ENCODE measurements at regions of chr5 and their contacts with region 1.

Region 1: DNA sequence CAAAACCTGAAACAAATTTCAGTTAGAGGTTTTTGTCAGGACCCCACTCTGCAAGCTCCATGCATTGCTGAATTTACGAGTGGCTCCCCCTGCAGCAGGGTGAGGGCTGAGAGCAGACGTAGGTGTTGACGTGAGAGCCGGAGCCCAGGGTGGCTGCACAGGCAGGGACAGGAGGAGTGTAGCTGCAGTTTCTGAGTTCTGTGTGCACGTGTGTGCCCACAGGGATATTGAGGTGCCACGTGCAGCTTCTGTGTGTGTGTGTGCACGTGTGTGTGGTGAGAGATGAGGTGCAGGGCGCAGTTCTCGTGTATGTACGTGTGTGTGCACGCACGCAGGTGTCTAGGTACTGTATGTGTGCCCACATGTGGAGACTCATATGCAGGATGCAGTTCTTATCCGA is 14.6 kb downstream of the PLEKHG4B start:
- DNase-seq: no peak
- H3K4me3 ChIP-seq: no peak overlapping the region
- H3K27ac ChIP-seq: no peak overlapping the region
- H3K4me1 ChIP-seq: no peaks in the 10 kb centered on the region
- H3K27me3 ChIP-seq: peaks cover 72% of the 10 kb centered on the region
- CTCF ChIP-seq: no peak

Region 2: DNA sequence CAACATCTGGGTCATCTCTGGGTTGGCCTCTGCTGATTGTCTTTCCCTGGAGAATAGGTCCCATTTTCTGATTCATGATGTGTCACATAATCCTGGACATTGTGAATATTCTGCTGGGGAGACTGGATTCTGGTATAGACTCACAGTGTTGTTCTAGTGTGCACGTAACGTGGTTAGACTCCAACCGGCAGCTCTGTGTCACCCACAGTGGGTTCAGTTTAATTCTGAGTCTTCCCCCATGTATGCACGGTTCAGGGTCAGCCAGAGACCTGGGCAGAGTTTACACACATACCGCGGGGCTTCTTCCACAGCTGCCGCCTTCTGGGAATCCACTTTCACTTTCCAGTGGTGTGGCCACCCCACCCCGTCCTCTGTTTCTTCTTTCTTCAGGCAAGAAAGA is 46.7 kb after region 1 on chr5:
- CTCF ChIA-PET with region 1: no interaction called
- POLR2A ChIA-PET with region 1: interaction called, 12 read pairs
- intact Hi-C with region 1: no loop called
- DNase-seq: no peak
- H3K4me3 ChIP-seq: no peak overlapping the region
- H3K27ac ChIP-seq: no peak overlapping the region
- H3K4me1 ChIP-seq: no peaks in the 10 kb centered on the region
- H3K27me3 ChIP-seq: peaks cover 88% of the 10 kb centered on the region
- CTCF ChIP-seq: no peak

Region 3: DNA sequence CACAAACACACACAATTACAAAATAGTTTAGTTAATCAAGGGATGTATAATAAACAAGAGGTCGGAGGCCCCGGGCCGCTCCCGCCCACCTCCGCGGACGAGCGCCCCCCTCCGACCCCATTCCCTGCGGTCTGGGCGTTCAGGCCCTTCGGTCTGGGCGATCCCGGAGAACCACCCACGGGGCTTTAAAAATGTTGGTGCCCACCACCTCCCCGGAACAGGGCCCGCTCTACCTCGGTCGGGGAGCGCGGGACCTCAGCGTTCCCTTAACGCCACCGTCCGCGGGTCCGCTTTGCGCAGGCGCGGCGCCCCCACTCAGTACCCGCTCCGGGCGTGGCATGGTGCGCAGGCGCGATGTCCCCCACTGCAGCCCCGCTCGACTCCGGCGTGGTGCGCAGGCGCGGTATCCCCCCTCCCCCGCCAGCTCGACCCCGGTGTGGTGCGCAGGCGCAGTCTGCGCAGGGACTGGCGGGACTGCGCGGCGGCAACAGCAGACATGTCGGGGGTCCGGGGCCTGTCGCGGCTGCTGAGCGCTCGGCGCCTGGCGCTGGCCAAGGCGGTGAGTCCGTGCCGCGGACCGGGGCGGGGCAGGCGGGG is 111.4 kb after region 1 on chr5 and contains the starts of genes CCDC127 and SDHA:
- CTCF ChIA-PET with region 1: no interaction called
- POLR2A ChIA-PET with region 1: no interaction called
- intact Hi-C with region 1: no loop called
- DNase-seq: peak; percentile 86 to 100
- H3K4me3 ChIP-seq: peak within 1 kb of the TSS; percentile 79
- H3K27ac ChIP-seq: no peak within 1 kb of the TSS
- H3K4me1 ChIP-seq: peaks cover 21% of the 10 kb centered on the region
- H3K27me3 ChIP-seq: no peaks in the 10 kb centered on the region
- CTCF ChIP-seq: peak; percentile 67
- total RNA-seq, gene CCDC127: 24.1 and 31.1 TPM in 2 replicates
- total RNA-seq, gene SDHA: 347 and 443 TPM in 2 replicates

Region 4: GRCh38 chr5:285639-286557 is 179.3 kb after region 1 on chr5:
- CTCF ChIA-PET with region 1: no interaction called
- POLR2A ChIA-PET with region 1: no interaction called
- intact Hi-C with region 1: no loop called
- DNase-seq: no peak
- H3K4me3 ChIP-seq: no peak overlapping the region
- H3K27ac ChIP-seq: no peak overlapping the region
- H3K4me1 ChIP-seq: no peaks in the 10 kb centered on the region
- H3K27me3 ChIP-seq: no peaks in the 10 kb centered on the region
- CTCF ChIP-seq: no peak

Region 5: GRCh38 chr5:305050-305449 is 198.5 kb after region 1 on chr5:
- CTCF ChIA-PET with region 1: interaction called, 10 read pairs
- POLR2A ChIA-PET with region 1: no interaction called
- intact Hi-C with region 1: no loop called
- DNase-seq: no peak
- H3K4me3 ChIP-seq: no peak overlapping the region
- H3K27ac ChIP-seq: no peak overlapping the region
- H3K4me1 ChIP-seq: no peaks in the 10 kb centered on the region; the same call in 1 of the 2 replicates
- H3K27me3 ChIP-seq: no peaks in the 10 kb centered on the region
- CTCF ChIP-seq: no peak

Region 6: DNA sequence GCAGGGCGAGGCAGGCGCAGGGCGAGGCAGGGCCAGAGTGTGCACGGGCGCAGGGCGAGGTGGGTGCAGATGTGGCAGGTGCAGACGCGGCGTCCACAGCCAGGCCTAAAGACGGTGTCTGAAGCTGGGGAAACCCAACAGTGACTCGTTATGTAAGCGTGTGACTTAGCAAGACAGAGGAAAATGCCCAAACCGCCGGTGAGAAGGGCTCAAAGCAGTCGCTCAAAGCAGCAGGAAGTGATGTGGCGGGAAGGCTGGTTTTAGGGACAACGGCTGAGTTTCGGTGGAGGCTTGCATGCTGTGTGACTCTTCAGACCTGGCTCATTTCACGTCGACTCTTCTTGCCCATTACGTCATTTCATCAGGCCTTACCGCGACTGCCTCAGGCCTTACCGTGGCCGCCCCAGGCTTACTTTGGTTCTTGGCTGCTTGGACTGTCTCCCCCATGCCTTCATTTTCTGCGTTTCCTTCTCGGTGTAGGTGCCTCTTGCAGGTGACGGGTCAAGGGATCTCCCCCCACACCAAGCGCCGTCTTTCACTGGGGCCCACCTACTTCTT is 285.9 kb after region 1 on chr5:
- CTCF ChIA-PET with region 1: no interaction called
- POLR2A ChIA-PET with region 1: no interaction called
- intact Hi-C with region 1: no loop called
- DNase-seq: peak in 1 of 2 experiments; percentile 61
- H3K4me3 ChIP-seq: no peak overlapping the region
- H3K27ac ChIP-seq: no peak overlapping the region
- H3K4me1 ChIP-seq: peaks cover 11% of the 10 kb centered on the region
- H3K27me3 ChIP-seq: no peaks in the 10 kb centered on the region
- CTCF ChIP-seq: no peak

Region 7: DNA sequence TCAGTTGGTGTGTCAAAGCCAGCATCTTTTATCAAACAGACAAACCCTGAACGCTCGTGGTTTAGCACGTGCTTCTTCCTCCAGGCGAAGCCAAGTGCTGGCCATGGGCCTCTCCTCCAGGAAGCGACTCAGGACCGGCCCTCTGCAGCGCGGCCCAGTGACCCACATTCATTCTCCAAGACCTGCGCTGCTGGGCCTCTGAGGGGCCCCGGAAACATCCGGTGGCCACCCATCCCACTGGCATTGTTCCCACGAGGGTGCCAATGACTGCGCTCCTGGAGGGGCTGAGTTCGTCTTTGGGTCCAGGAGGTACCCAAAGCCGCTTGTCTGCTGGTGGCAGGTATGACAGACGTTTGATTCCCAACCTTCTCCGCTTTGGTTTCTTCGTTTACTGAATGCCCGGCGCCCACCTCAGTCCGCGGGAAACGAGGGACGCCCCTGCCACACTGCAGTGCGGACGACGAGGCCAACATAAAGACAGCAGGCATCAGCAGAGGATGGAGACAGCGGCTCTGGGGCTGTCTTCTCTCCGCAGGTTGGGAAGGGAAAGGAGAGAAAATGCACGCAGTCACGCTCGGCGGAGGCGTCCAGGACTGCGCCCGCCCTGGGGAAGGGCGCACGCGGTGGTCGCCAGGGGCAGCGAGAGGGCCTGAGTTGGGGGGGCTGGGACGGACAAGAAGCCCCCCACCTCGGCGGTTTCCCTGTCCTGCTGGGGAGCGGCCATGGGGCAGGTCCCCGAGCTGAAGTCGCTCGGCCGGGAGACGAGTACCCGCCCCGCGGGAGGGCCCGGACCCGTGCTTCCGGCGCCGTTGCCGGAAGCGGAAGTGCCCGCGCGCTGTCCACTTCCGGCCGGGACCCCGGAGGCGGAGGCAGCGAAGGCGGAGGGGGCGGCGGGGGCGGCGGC is 336.0 kb after region 1 on chr5 and contains the start of gene EXOC3:
- CTCF ChIA-PET with region 1: interaction called, 19 read pairs
- POLR2A ChIA-PET with region 1: no interaction called
- intact Hi-C with region 1: no loop called
- DNase-seq: peak; percentile 71 to 92
- H3K4me3 ChIP-seq: peak within 1 kb of the TSS; percentile 99
- H3K27ac ChIP-seq: peak within 1 kb of the TSS; percentile 25
- H3K4me1 ChIP-seq: peaks cover 24% of the 10 kb centered on the region
- H3K27me3 ChIP-seq: no peaks in the 10 kb centered on the region
- CTCF ChIP-seq: no peak
- total RNA-seq, gene EXOC3: 155 and 188 TPM in 2 replicates

Measured in PC-9 (cell line).